Ovary (tissue), 10 donors: ENCODE measurements at regions of chr17 and their contacts with region 1.

Region 1: DNA sequence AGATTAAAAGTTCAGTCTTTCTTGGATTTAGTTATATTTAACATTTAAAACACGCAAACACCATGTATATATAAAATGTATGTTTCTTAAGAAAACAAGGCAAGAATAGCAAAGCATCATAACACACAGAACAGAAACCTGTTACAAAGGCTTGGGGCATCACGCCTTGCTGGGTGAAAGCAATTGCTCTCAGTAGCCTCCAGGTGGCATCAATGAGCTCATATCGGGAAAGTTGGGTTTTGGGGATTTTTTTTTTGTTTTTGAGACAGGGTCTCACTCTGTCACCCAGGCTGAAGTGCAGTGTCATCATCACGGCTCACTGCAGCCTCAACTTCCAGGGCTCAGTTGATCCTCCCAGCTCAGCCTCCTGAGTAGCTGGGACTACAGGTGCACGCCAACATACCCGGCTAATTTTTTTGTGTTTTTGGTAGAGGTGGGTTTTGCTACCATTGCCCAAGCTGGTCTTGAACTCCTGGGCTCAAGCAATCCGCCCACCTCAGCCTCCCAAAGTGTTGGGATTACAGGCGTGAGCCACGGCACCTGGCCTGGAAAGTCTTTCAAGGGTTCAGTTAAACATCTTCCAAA is 56.9 kb downstream of the CYB5D2 start:
- DNase-seq: no peak
- H3K4me3 ChIP-seq: no peak overlapping the region
- H3K27ac ChIP-seq: no peak overlapping the region
- H3K4me1 ChIP-seq: peaks cover 2% of the 10 kb centered on the region
- H3K27me3 ChIP-seq: no peaks in the 10 kb centered on the region
- CTCF ChIP-seq: peak in 2 of 3 donors; percentile 21 to 36
- EP300 ChIP-seq: no peak
- POLR2A ChIP-seq: no peak

Region 2: GRCh38 chr17:4412933-4413831 is 213.3 kb after region 1 on chr17:
- intact Hi-C with region 1: loop called in 1 of 4 experiments (anchors 5 kb)
- DNase-seq: peak; percentile 92 to 97 (median 95)
- H3K4me3 ChIP-seq: no peak overlapping the region
- H3K27ac ChIP-seq: no peak overlapping the region
- H3K4me1 ChIP-seq: no peaks in the 10 kb centered on the region
- H3K27me3 ChIP-seq: no peaks in the 10 kb centered on the region
- CTCF ChIP-seq: peak; percentile 85 to 96 (median 92)
- EP300 ChIP-seq: no peak
- POLR2A ChIP-seq: no peak